Activated CD8-positive, alpha-beta T cell treated with anti-CD3 and anti-CD28 coated beads, Interleukin-2, amount 10 ng/mL, durations not matched to agents 7 days and 5 days (primary cell): ENCODE measurements at regions of chr19 and their contacts with region 1.

Region 1: GRCh38 chr19:47210689-47211316 is 20.2 kb downstream of the BBC3 start:
- DNase-seq: peak; percentile 90
- ATAC-seq: peak; percentile 79
- H3K4me3 Mint-ChIP-seq: no peak overlapping the region
- H3K27ac Mint-ChIP-seq: peak overlapping the region; percentile 91
- H3K4me1 Mint-ChIP-seq: peaks cover 19% of the 10 kb centered on the region
- H3K27me3 Mint-ChIP-seq: no peaks in the 10 kb centered on the region

Region 2: GRCh38 chr19:46990991-46991676 is 219.7 kb before region 1 on chr19:
- CTCF ChIA-PET with region 1: no interaction called
- POLR2A ChIA-PET with region 1: no interaction called
- DNase-seq: peak; percentile 63
- ATAC-seq: peak; percentile 68
- H3K4me3 Mint-ChIP-seq: no peak overlapping the region
- H3K27ac Mint-ChIP-seq: peak overlapping the region; percentile 68
- H3K4me1 Mint-ChIP-seq: peaks cover 15% of the 10 kb centered on the region
- H3K27me3 Mint-ChIP-seq: no peaks in the 10 kb centered on the region

Region 3: GRCh38 chr19:47143322-47144073 is 67.3 kb before region 1 on chr19:
- CTCF ChIA-PET with region 1: interaction called, 64 read pairs
- POLR2A ChIA-PET with region 1: no interaction called
- DNase-seq: no peak
- ATAC-seq: no peak
- H3K4me3 Mint-ChIP-seq: no peak overlapping the region
- H3K27ac Mint-ChIP-seq: peak overlapping the region; percentile 26
- H3K4me1 Mint-ChIP-seq: peaks cover 56% of the 10 kb centered on the region
- H3K27me3 Mint-ChIP-seq: no peaks in the 10 kb centered on the region

Region 4: GRCh38 chr19:47157431-47158321 is 53.1 kb before region 1 on chr19:
- CTCF ChIA-PET with region 1: interaction called, 64 read pairs
- POLR2A ChIA-PET with region 1: no interaction called
- DNase-seq: peak; percentile 61
- ATAC-seq: peak; percentile 12
- H3K4me3 Mint-ChIP-seq: peak overlapping the region; percentile 63
- H3K27ac Mint-ChIP-seq: peak overlapping the region; percentile 85
- H3K4me1 Mint-ChIP-seq: peaks cover 60% of the 10 kb centered on the region
- H3K27me3 Mint-ChIP-seq: no peaks in the 10 kb centered on the region

Region 5: DNA sequence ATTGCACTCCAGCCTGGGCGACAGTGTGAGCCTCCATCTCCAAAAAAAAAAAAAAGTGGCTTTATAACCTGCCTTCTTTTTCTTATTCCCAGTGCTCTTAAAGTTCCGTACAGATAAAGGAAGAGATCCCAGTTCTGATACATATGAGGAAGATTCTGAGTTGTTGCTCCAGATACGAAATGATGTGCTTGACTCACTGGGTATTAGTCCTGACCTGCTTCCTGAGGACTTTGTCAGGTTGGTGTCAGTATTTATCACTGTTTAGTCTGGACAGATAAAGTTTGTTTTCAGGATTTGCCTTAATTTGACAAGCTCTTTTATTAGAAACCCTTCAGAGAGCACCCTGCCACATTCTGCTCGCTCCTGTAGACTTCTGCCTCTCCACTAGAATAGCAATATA is 13.7 kb before region 1 on chr19:
- CTCF ChIA-PET with region 1: interaction called, 35 read pairs
- POLR2A ChIA-PET with region 1: interaction called, 4 read pairs
- DNase-seq: no peak
- ATAC-seq: no peak
- H3K4me3 Mint-ChIP-seq: no peak overlapping the region
- H3K27ac Mint-ChIP-seq: no peak overlapping the region
- H3K4me1 Mint-ChIP-seq: peaks cover 7% of the 10 kb centered on the region
- H3K27me3 Mint-ChIP-seq: no peaks in the 10 kb centered on the region

Region 6: GRCh38 chr19:47231215-47231984 is 20.6 kb after region 1 on chr19:
- CTCF ChIA-PET with region 1: interaction called, 109 read pairs
- POLR2A ChIA-PET with region 1: interaction called, 39 read pairs
- DNase-seq: peak; percentile 92
- ATAC-seq: peak; percentile 52
- H3K4me3 Mint-ChIP-seq: peak overlapping the region; percentile 72
- H3K27ac Mint-ChIP-seq: peak overlapping the region; percentile 87
- H3K4me1 Mint-ChIP-seq: peaks cover 28% of the 10 kb centered on the region
- H3K27me3 Mint-ChIP-seq: peaks cover 3% of the 10 kb centered on the region